ENCODE measurements at regions of chr14 and their contacts with region 1.

Region 1: DNA sequence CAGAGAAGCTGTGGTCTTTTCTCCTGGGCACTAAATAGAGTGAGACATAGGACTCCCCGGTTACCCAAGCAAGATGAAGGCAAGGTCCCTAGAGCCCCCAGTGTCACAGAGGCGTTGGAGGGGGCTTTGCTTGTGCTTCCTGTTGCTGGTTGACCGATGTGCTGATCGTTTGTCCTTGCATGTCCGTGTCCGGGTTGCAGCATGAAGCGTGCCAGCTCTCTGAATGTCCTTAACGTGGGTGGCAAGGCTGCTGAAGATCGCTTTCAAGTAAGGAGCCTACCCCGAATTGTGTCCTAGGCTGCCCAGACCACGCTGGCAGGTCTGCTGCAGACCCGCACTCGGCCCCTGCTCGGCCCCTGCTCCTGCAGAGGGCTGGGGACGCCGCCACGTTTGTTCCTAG is 23.1 kb downstream of the XRCC3 start:
- DNase-seq: no peak
- H3K4me3 ChIP-seq: no peak overlapping the region
- H3K27ac ChIP-seq: no peak overlapping the region
- H3K4me1 ChIP-seq: peaks cover 15% of the 10 kb centered on the region
- H3K27me3 ChIP-seq: no peaks in the 10 kb centered on the region
- CTCF ChIP-seq: no peak

Region 2: GRCh38 chr14:103679351-103679750 is 12.8 kb before region 1 on chr14:
- CTCF ChIA-PET with region 1: interaction called, 8 read pairs
- POLR2A ChIA-PET with region 1: interaction called, 13 read pairs
- intact Hi-C with region 1: no loop called
- DNase-seq: no peak
- H3K4me3 ChIP-seq: no peak overlapping the region
- H3K27ac ChIP-seq: no peak overlapping the region
- H3K4me1 ChIP-seq: no peaks in the 10 kb centered on the region
- H3K27me3 ChIP-seq: no peaks in the 10 kb centered on the region
- CTCF ChIP-seq: peak; percentile 72

Region 3: GRCh38 chr14:103705118-103705503 is 13.0 kb after region 1 on chr14:
- CTCF ChIA-PET with region 1: no interaction called
- POLR2A ChIA-PET with region 1: interaction called, 19 read pairs
- intact Hi-C with region 1: loop called (anchors 1 kb)
- DNase-seq: peak; percentile 99 to 100
- H3K4me3 ChIP-seq: no peak overlapping the region; the same call in 1 of the 2 replicates
- H3K27ac ChIP-seq: peak overlapping the region; percentile 44
- H3K4me1 ChIP-seq: peaks cover 19% of the 10 kb centered on the region
- H3K27me3 ChIP-seq: no peaks in the 10 kb centered on the region
- CTCF ChIP-seq: no peak

Region 4: DNA sequence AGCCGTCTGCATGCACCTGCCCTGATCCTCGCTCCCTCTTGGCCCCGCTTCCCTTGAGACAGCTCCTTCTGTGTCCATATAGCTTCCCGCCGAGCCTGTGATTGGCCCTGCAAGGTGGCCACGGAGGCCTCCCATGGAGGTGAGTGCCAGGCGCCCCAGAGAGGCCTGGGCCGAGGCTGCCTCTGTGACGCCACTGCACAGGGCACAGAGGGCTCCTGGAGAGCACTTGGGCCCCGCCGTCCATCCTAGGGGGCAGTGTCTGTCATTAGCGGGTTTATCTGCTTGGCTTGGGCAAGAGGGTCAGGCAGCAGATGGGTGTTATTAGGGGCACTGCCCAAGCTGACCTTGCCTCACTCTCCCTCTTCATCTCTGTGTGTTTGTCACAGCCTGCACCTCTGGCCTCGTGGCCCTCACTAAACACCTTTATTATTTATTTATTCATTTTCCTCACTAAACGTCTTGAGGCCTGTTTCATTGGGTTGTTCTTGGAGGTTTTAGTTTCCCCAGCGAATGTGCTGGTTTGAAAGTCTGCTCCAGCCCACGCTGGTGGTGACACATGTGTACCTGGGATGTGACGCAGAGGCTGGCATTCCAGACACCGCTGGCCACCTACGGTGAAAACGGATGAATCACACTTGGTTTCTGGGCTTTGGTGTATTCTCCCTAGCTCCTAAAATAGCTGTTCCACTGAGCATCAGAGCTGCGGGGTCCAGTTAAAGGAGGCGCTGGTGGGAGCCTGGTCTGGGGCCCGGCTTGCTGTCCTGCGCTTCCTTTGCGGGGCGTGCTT is 29.4 kb after region 1 on chr14:
- CTCF ChIA-PET with region 1: interaction called, 3 read pairs
- POLR2A ChIA-PET with region 1: no interaction called
- intact Hi-C with region 1: loop called (anchors 2 kb)
- DNase-seq: peak; percentile 74 to 88
- H3K4me3 ChIP-seq: no peak overlapping the region
- H3K27ac ChIP-seq: peak overlapping the region; percentile 34
- H3K4me1 ChIP-seq: peaks cover 23% of the 10 kb centered on the region
- H3K27me3 ChIP-seq: no peaks in the 10 kb centered on the region
- CTCF ChIP-seq: no peak; the same call in 1 of the 2 replicates